HepG2 (cell line): ENCODE measurements at regions of chr20 and their contacts with region 1.

Region 1: DNA sequence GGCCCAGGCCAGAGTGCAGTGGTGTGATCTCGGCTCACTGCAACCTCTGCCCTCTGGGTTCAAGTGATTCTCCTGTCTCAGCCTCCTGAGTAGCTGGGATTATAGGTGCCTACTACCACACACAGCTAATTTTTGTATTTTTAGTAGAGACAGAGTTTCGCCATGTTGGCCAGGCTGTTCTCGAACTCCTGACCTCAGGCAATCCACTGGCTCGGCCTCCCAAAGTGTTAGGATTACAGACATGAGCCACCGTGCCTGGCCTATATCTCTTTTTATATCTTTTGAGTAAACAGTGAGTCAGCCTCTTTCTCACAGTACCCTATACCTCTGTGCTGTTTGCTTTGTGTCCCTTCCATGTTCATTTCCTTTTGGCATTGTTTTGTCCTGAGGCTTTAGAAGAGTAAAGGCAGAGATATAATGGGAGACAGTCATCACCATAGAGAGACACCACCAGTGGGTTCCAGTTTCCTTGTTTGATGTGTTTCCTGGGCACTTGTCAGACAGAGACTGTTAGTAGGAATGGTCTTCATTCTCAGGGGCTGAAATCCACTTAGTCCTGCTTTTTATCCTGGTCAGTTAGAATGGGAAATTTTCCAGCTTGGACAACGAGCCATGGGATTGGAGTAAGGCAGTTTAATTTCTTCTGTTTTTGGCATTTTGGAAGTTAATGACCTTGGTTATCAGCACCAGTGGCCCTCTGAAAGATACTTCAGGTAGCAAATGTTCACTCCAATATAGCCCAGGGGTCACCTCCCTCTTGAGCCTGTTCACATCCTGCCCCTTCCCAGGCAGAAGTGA is 32.2 kb upstream of the ASXL1 start:
- DNase-seq: peak; percentile 99
- ATAC-seq: peak; percentile 84
- H3K4me3 ChIP-seq: peak overlapping the region in 1 of 3 experiments; percentile 8; a peak in 1 of 6 replicates
- H3K27ac ChIP-seq: peak overlapping the region; percentile 86
- H3K4me1 ChIP-seq: peaks cover 72% of the 10 kb centered on the region
- H3K27me3 ChIP-seq: no peaks in the 10 kb centered on the region
- CTCF ChIP-seq: no peak
- EP300 ChIP-seq: peak; percentile 82 to 89
- POLR2A ChIP-seq: no peak
- RAD21 ChIP-seq: no peak; the same call in none of the 2 replicates

Region 2: GRCh38 chr20:31781945-31782344 is 544.0 kb before region 1 on chr20:
- CTCF ChIA-PET with region 1: no interaction called
- POLR2A ChIA-PET with region 1: no interaction called
- in situ Hi-C with region 1: no loop called
- intact Hi-C with region 1: no loop called
- DNase-seq: no peak
- ATAC-seq: no peak
- H3K4me3 ChIP-seq: no peak overlapping the region
- H3K27ac ChIP-seq: no peak overlapping the region
- H3K4me1 ChIP-seq: no peaks in the 10 kb centered on the region
- H3K27me3 ChIP-seq: no peaks in the 10 kb centered on the region
- CTCF ChIP-seq: no peak
- EP300 ChIP-seq: no peak
- POLR2A ChIP-seq: no peak
- RAD21 ChIP-seq: no peak

Region 3: DNA sequence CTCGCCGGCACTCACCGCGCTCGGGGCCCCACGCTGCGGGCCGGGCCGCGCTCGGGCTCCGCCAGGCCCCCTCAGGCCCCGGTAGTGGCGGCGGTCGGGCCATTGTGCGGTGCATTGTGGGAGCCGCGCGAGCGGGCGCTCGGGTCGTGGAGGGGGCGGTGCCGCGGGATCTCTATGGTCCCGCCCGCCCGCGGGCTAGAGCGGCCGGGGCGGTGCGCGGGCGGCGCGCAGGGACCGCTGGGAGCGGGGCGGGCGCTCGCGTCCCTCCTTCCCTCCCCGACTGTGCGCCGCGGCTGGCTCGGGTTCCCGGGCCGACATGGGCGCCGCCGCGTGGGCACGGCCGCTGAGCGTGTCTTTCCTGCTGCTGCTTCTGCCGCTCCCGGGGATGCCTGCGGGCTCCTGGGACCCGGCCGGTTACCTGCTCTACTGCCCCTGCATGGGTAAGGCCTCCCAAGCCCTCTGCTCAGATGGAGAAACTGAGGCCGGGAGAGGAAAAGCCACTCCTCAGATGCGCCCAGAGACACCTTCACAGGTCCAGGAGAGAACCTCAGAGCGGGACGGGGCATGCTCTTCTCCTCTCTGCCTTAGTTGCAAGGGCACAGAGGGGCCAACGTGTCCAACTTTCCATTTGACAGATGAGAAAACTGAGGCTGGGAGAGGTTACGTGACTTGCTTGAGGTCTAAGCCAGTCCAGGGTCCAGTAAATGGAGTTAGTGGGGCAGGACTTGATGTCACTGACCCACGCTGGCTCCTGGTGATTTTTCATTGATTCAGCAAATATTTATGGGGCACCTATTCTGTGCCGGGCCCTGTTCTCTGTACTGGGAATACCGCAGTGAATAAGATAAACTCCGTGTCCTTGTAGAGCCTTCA is 118.0 kb before region 1 on chr20 and contains the starts of genes PLAGL2 and POFUT1:
- CTCF ChIA-PET with region 1: no interaction called
- POLR2A ChIA-PET with region 1: no interaction called
- in situ Hi-C with region 1: no loop called
- intact Hi-C with region 1: loop called (anchors 5 kb)
- DNase-seq: peak; percentile 82
- ATAC-seq: peak; percentile 96
- H3K4me3 ChIP-seq: peak within 1 kb of the TSS; percentile 91 to 99 (median 94)
- H3K27ac ChIP-seq: peak within 1 kb of the TSS; percentile 76
- H3K4me1 ChIP-seq: peaks cover 74% of the 10 kb centered on the region
- H3K27me3 ChIP-seq: peaks cover 0 to 7% of the 10 kb centered on the region in 2 experiments; a peak in 1 of 5 replicates
- CTCF ChIP-seq: peak; percentile 74
- EP300 ChIP-seq: peak; percentile 40 to 66; a peak in 1 of 4 replicates
- POLR2A ChIP-seq: peak; percentile 92 to 96
- RAD21 ChIP-seq: peak; percentile 93
- total RNA-seq, gene PLAGL2: 15.3 and 26.5 TPM in 2 replicates
- total RNA-seq, gene POFUT1: 30.2 and 58.3 TPM in 2 replicates

Region 4: GRCh38 chr20:32368925-32369324 is 43.0 kb after region 1 on chr20:
- CTCF ChIA-PET with region 1: no interaction called
- POLR2A ChIA-PET with region 1: interaction called, 3 read pairs
- in situ Hi-C with region 1: no loop called
- intact Hi-C with region 1: loop called (anchors 5 kb)
- DNase-seq: no peak
- ATAC-seq: no peak
- H3K4me3 ChIP-seq: peak overlapping the region in 1 of 3 experiments; percentile 9; a peak in 1 of 6 replicates
- H3K27ac ChIP-seq: peak overlapping the region; percentile 50
- H3K4me1 ChIP-seq: peaks cover 65% of the 10 kb centered on the region
- H3K27me3 ChIP-seq: no peaks in the 10 kb centered on the region
- CTCF ChIP-seq: no peak
- EP300 ChIP-seq: no peak
- POLR2A ChIP-seq: no peak
- RAD21 ChIP-seq: no peak